Activated T-helper 2 cell treated with anti-CD3 and anti-CD28 coated beads, Interferon-gamma antibody, Interleukin-2, Interleukin-4, amounts not matched to agents 10 μg/mL and 5 μg/mL and 100 μg/mL, durations not matched to agents 14 hours and 24 hours and 36 hours (primary cell): ENCODE measurements at regions of chr22 and their contacts with region 1.

Region 1: GRCh38 chr22:37242395-37242918 is 1.6 kb downstream of the RAC2 start:
- DNase-seq: peak; percentile 92
- H3K4me3 Mint-ChIP-seq: peak overlapping the region; percentile 96
- H3K27ac Mint-ChIP-seq: peak overlapping the region; percentile 94
- H3K4me1 Mint-ChIP-seq: peaks cover 51% of the 10 kb centered on the region
- H3K27me3 Mint-ChIP-seq: no peaks in the 10 kb centered on the region

Region 2: GRCh38 chr22:37109242-37109917 is 133.1 kb before region 1 on chr22 and contains the start of gene TMPRSS6:
- intact Hi-C with region 1: no loop called
- DNase-seq: no peak
- H3K4me3 Mint-ChIP-seq: no peak within 1 kb of the TSS
- H3K27ac Mint-ChIP-seq: no peak within 1 kb of the TSS
- H3K4me1 Mint-ChIP-seq: peaks cover 5% of the 10 kb centered on the region
- H3K27me3 Mint-ChIP-seq: no peaks in the 10 kb centered on the region
- total RNA-seq, gene TMPRSS6: 9.2 and 10.2 TPM in 2 replicates

Region 3: GRCh38 chr22:37260901-37261336 is 18.5 kb after region 1 on chr22:
- intact Hi-C with region 1: loop called (anchors 2 kb)
- DNase-seq: no peak
- H3K4me3 Mint-ChIP-seq: no peak overlapping the region
- H3K27ac Mint-ChIP-seq: peak overlapping the region; percentile 48
- H3K4me1 Mint-ChIP-seq: peaks cover 22% of the 10 kb centered on the region
- H3K27me3 Mint-ChIP-seq: peaks cover 10% of the 10 kb centered on the region

Region 4: DNA sequence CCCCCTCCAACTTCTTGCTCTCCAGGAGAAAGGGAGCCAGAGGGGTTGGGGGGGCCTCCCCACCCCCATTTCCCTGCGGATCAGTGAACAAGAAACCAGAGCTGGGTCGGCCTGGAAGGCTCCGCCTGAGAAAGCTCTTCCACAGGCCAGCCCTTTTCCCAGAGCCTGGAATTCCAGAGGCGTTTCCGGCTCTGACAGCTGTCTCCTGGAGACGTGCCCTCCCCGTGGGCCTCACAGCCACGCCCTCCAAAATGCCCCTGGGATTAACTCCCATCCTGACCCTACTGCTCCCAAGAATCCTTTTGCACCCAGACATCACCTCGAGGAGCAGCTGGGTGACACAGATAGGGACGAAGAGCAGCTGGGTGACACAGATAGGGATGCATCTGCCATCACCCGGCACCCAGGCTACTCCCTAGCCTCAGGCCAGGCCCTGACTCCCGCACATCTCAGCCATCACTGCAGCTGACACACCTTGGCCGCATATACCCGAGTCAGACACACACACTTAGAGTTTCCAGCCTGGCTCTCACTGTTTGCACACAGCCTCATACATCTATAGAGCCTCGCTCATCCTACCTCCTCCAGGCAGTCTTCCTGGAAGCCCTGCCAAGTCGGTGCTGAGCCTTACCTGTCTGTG is 310.2 kb after region 1 on chr22:
- intact Hi-C with region 1: no loop called
- DNase-seq: no peak
- H3K4me3 Mint-ChIP-seq: no peak overlapping the region
- H3K27ac Mint-ChIP-seq: no peak overlapping the region
- H3K4me1 Mint-ChIP-seq: no peaks in the 10 kb centered on the region
- H3K27me3 Mint-ChIP-seq: peaks cover 37% of the 10 kb centered on the region